H1 (cell line): ENCODE measurements at regions of chr5 and their contacts with region 1.

Region 1: DNA sequence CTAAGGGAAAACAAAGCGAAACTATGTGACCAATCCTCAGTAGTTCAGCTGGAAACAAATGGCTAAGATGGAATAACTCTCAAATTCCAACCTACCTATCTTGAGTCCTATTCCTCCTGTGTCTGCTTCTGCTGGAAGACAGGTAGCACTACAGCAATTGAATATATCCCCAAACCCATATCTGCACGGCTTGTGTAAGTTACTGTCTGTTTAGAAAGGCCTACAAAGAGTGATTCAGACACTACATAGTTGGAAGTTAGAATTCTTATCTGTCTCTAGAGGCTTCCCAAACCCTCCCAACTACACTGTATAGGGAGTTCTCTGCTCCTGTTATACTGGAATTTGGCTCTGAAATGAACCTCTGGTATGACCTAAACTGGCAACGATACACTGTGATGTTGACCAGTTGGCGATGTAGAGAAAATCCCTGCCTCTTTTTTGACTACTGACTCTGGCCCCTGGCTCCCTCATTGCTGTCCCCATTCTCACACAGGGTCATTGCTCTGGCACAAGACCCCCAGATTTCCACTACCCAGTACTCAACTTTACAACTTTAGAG is 22.6 kb upstream of the NADK2 start:
- DNase-seq: no peak
- H3K4me3 ChIP-seq: no peak overlapping the region
- H3K27ac ChIP-seq: no peak overlapping the region
- H3K4me1 ChIP-seq: no peaks in the 10 kb centered on the region
- H3K27me3 ChIP-seq: no peaks in the 10 kb centered on the region
- CTCF ChIP-seq: no peak
- EP300 ChIP-seq: no peak
- POLR2A ChIP-seq: no peak
- RAD21 ChIP-seq: no peak

Region 2: DNA sequence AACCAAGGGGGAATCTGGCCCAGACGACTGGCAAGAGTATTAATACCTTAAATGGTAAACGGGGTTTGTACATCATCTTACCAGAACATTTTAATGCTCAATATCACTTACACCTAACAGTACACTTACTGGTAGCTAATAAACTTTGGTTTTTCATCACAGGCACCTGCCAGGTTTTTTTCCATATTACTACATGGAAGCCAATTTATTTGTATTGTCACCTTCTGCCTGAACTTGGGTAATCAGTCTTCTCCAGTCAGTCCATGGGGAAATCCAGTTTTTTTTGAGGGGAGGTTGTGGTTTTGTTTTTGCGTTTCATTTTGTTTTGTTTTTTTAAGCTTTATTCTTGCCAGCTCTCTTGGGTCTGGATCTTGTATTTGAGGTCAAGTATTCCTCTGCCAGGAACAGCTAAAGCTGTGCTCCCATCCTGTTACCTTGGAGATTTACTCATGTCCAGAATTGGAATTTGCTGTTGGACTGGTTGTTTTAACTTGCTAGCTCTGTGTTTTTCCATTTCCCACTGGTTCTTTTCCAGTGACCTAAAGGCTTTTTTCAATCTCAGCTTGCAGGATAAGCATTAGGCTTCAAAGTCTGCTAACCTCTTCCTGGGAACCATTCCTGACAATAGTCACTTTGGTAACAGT is 11.4 kb before region 1 on chr5:
- CTCF ChIA-PET with region 1: interaction called, 10 read pairs
- POLR2A ChIA-PET with region 1: no interaction called
- DNase-seq: no peak
- H3K4me3 ChIP-seq: no peak overlapping the region
- H3K27ac ChIP-seq: no peak overlapping the region
- H3K4me1 ChIP-seq: no peaks in the 10 kb centered on the region
- H3K27me3 ChIP-seq: peaks cover 0 to 1% (median 0%) of the 10 kb centered on the region in 4 experiments; a peak in 1 of 7 replicates
- CTCF ChIP-seq: no peak
- EP300 ChIP-seq: no peak
- POLR2A ChIP-seq: no peak
- RAD21 ChIP-seq: no peak

Region 3: GRCh38 chr5:36279054-36279698 is 14.9 kb after region 1 on chr5:
- CTCF ChIA-PET with region 1: interaction called, 46 read pairs
- POLR2A ChIA-PET with region 1: no interaction called
- DNase-seq: no peak
- H3K4me3 ChIP-seq: no peak overlapping the region
- H3K27ac ChIP-seq: no peak overlapping the region
- H3K4me1 ChIP-seq: peaks cover 0 to 4% (median 0%) of the 10 kb centered on the region in 4 experiments; a peak in 1 of 7 replicates
- H3K27me3 ChIP-seq: no peaks in the 10 kb centered on the region; a peak in 1 of 7 replicates
- CTCF ChIP-seq: no peak
- EP300 ChIP-seq: no peak
- POLR2A ChIP-seq: no peak
- RAD21 ChIP-seq: no peak

Region 4: GRCh38 chr5:36305571-36306326 is 41.5 kb after region 1 on chr5:
- CTCF ChIA-PET with region 1: interaction called, 30 read pairs
- POLR2A ChIA-PET with region 1: no interaction called
- DNase-seq: no peak
- H3K4me3 ChIP-seq: no peak overlapping the region
- H3K27ac ChIP-seq: no peak overlapping the region
- H3K4me1 ChIP-seq: no peaks in the 10 kb centered on the region
- H3K27me3 ChIP-seq: no peaks in the 10 kb centered on the region
- CTCF ChIP-seq: peak; percentile 49 to 77 (median 76)
- EP300 ChIP-seq: no peak
- POLR2A ChIP-seq: no peak
- RAD21 ChIP-seq: peak; percentile 85 to 88

Region 5: GRCh38 chr5:36346896-36347690 is 82.8 kb after region 1 on chr5:
- CTCF ChIA-PET with region 1: no interaction called
- POLR2A ChIA-PET with region 1: no interaction called
- DNase-seq: no peak
- H3K4me3 ChIP-seq: no peak overlapping the region
- H3K27ac ChIP-seq: no peak overlapping the region
- H3K4me1 ChIP-seq: no peaks in the 10 kb centered on the region
- H3K27me3 ChIP-seq: no peaks in the 10 kb centered on the region
- CTCF ChIP-seq: no peak
- EP300 ChIP-seq: no peak
- POLR2A ChIP-seq: no peak
- RAD21 ChIP-seq: no peak